ENCODE measurements at regions of chr21 and their contacts with region 1.

Region 1: DNA sequence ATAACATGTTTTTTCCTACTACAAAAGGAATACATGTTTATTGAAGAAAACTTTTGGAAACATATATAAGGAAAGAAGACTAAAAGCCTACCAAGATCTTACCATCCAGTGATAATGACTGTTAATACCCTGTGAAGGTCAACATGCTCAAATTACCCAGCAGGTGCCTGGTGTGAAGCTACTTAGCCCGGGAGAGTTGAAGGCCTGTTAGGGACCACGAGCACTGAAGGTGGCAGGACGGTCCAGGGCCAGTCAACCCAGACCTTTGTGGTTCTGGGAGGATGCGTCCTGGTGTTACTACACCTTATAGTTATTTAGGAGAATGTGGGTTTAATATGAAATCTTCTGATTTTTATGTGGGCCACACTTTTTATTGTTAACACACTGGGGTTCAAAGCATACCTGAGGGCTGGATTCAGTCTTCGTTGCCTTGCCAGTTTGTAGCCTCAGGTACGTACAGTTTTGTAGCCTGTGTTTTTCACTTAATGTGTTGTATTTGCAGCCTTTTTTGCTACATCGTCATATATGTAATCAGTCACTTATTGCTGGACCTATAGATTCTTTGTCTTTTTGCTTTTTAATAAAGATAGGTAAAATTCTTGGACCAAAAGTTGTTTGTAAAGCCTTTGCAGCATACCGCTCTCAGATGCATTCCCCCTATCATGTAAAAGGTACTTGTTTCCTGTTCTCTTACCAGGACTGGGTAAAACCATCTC is 9.8 kb downstream of the ITSN1 start:
- DNase-seq: no peak
- ATAC-seq: peak; percentile 48 to 79 (median 69)
- H3K4me3 ChIP-seq: no peak overlapping the region
- H3K27ac ChIP-seq: no peak overlapping the region
- H3K4me1 ChIP-seq: peaks cover 20% of the 10 kb centered on the region
- H3K27me3 ChIP-seq: no peaks in the 10 kb centered on the region
- CTCF ChIP-seq: no peak

Region 2: DNA sequence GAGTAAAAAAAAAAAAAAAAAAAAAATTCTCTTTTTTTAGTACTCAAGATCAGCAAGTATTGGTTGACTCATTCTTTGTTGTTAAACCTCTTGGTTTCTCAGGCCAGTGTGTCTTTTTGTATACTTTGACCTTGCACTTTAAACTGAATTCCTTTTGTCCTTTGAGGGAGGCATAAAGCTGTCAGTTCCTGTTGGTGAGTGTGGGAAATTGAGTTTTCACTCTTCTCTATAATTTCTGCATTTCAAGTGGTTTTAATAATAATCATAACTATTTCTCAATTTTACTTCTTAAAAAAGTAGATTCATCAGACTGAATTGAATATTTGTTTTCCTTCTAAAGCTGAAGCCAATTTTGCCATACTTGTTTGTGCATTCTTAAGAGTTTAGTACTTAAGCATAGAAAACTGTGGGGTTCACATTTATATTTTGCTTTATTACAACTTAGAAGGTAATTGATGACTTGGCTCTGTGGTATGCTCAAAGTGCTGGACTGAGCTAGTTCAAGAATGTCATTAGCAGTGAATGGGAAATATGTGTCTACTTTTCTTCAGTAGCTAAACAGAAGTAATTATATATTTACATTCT is 33.6 kb after region 1 on chr21:
- intact Hi-C with region 1: loop called in 1 of 2 experiments (anchors 5 kb)
- DNase-seq: no peak
- ATAC-seq: no peak
- H3K4me3 ChIP-seq: no peak overlapping the region
- H3K27ac ChIP-seq: no peak overlapping the region
- H3K4me1 ChIP-seq: peaks cover 46% of the 10 kb centered on the region
- H3K27me3 ChIP-seq: no peaks in the 10 kb centered on the region
- CTCF ChIP-seq: no peak